Caco-2 (cell line): ENCODE measurements at regions of chr11 and their contacts with region 1.

Region 1: DNA sequence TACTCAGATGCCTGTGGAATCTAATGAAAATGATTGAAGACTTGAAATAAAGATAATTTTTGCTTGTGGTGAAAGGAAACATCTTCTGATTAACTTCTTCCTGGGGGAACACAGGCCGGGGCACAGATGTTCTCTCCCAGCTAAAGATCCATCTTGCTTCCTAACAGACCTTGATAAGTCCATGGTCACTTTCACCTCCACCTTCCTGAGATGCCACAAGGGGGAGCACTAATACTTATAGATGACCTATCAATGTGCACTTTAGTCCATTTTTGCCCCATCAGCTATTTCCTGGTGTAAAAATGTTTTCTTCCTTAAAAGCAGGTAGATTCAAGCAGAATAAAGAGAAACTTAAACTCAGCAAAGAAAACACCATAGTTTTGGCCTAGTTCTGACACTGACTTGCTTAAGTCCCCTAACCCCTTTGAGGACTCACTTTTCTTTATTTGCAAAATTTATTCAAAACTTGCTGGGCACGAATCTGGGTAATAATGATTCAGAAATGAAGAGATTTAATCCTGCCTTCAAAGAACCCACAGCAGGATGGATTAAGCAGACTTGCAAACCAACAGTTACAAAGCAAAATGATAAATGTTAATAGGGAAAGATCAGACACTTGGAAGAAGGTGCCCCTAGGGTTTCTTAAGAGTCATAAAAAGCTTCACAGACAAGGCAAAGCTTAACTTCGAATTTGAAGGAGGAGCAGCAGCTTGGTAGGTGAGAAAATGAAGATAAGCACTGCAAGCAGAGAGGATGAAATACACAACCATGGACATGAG is 158.7 kb downstream of the RAB38 start:
- DNase-seq: peak; percentile 83 to 88
- H3K4me3 ChIP-seq: no peak overlapping the region
- H3K4me3 Mint-ChIP-seq: no peak overlapping the region
- H3K27ac Mint-ChIP-seq: no peak overlapping the region
- H3K4me1 ChIP-seq: no peaks in the 10 kb centered on the region
- H3K4me1 Mint-ChIP-seq: peaks cover 6% of the 10 kb centered on the region
- H3K27me3 ChIP-seq: no peaks in the 10 kb centered on the region
- H3K27me3 Mint-ChIP-seq: no peaks in the 10 kb centered on the region
- CTCF ChIP-seq: peak; percentile 88 to 89

Region 2: DNA sequence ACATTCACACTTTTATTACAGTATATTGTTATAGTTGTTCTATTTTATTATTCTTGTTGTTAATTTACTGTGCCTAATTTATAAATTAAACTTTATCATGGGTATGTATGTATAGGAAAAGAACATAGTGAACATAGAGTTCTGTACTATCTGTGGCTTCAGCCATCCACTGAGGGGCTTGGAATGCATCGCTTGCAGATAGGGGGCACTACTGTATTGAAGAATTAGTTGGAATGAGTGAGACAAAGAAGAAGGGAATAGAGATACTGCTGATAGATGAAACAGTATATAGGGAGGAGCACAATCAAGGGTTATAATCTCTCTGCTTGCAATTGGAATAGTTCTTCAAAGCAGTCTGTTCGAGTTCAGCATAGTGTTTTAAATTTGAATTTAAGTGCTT is 273.6 kb before region 1 on chr11:
- CTCF ChIA-PET with region 1: no interaction called
- POLR2A ChIA-PET with region 1: no interaction called
- intact Hi-C with region 1: loop called (anchors 1 kb)
- DNase-seq: peak in 1 of 2 experiments; percentile 39
- H3K4me3 ChIP-seq: no peak overlapping the region
- H3K4me3 Mint-ChIP-seq: no peak overlapping the region
- H3K27ac Mint-ChIP-seq: no peak overlapping the region
- H3K4me1 ChIP-seq: no peaks in the 10 kb centered on the region
- H3K4me1 Mint-ChIP-seq: peaks cover 7% of the 10 kb centered on the region
- H3K27me3 ChIP-seq: no peaks in the 10 kb centered on the region
- H3K27me3 Mint-ChIP-seq: no peaks in the 10 kb centered on the region
- CTCF ChIP-seq: peak; percentile 33 to 49

Region 3: DNA sequence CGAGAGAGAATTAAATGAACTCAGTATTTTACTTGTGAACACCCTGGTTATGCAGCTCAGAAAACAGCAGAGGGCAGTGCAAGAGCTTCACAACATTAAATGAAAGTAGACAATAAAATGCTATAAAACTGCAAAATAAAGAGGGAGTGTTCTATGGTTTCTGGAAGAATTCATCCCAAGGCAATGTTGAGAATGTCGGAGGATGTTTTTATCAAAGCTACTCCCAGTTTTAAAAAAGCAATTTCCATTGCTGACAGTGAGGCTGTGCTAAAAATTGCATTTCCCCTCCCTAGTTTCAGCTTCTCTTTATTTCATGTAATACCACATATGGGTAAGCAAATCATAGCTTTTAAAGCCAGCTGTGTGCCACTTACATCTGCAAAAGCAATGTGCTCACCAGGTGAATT is 138.2 kb before region 1 on chr11:
- CTCF ChIA-PET with region 1: interaction called, 7 read pairs
- POLR2A ChIA-PET with region 1: no interaction called
- intact Hi-C with region 1: loop called (anchors 1 kb)
- DNase-seq: peak; percentile 32 to 45
- H3K4me3 ChIP-seq: no peak overlapping the region
- H3K4me3 Mint-ChIP-seq: no peak overlapping the region
- H3K27ac Mint-ChIP-seq: no peak overlapping the region
- H3K4me1 ChIP-seq: no peaks in the 10 kb centered on the region
- H3K4me1 Mint-ChIP-seq: no peaks in the 10 kb centered on the region
- H3K27me3 ChIP-seq: no peaks in the 10 kb centered on the region
- H3K27me3 Mint-ChIP-seq: no peaks in the 10 kb centered on the region
- CTCF ChIP-seq: peak; percentile 78 to 82

Region 4: GRCh38 chr11:88042238-88042637 is 25.7 kb after region 1 on chr11:
- CTCF ChIA-PET with region 1: no interaction called
- POLR2A ChIA-PET with region 1: no interaction called
- intact Hi-C with region 1: no loop called
- DNase-seq: no peak
- H3K4me3 ChIP-seq: no peak overlapping the region
- H3K4me3 Mint-ChIP-seq: no peak overlapping the region
- H3K27ac Mint-ChIP-seq: no peak overlapping the region
- H3K4me1 ChIP-seq: no peaks in the 10 kb centered on the region
- H3K4me1 Mint-ChIP-seq: no peaks in the 10 kb centered on the region
- H3K27me3 ChIP-seq: no peaks in the 10 kb centered on the region
- H3K27me3 Mint-ChIP-seq: peaks cover 24% of the 10 kb centered on the region
- CTCF ChIP-seq: no peak

Region 5: DNA sequence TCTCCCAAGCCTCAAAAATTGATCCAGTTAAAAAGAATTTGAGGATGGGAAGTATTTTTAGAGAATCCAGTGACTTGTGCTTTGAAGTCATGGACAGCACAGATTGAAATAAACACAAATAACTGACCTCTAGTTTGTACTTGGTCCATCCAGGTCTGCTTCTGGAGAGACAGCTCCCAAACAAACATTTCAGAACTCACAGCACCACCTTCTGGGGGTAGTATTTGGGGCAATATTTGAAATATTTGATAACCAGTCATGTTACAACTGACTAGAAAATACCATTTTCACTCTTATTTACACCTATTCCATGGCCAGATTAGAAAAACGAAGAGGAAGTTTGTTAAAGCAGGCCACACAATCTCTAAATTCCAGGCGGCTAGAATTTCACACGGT is 264.7 kb after region 1 on chr11:
- CTCF ChIA-PET with region 1: interaction called, 7 read pairs
- POLR2A ChIA-PET with region 1: no interaction called
- intact Hi-C with region 1: loop called (anchors 1 kb)
- DNase-seq: peak in 1 of 2 experiments; percentile 25
- H3K4me3 ChIP-seq: no peak overlapping the region
- H3K4me3 Mint-ChIP-seq: no peak overlapping the region
- H3K27ac Mint-ChIP-seq: no peak overlapping the region
- H3K4me1 ChIP-seq: no peaks in the 10 kb centered on the region
- H3K4me1 Mint-ChIP-seq: no peaks in the 10 kb centered on the region
- H3K27me3 ChIP-seq: no peaks in the 10 kb centered on the region
- H3K27me3 Mint-ChIP-seq: no peaks in the 10 kb centered on the region
- CTCF ChIP-seq: peak; percentile 21 to 33

Region 6: DNA sequence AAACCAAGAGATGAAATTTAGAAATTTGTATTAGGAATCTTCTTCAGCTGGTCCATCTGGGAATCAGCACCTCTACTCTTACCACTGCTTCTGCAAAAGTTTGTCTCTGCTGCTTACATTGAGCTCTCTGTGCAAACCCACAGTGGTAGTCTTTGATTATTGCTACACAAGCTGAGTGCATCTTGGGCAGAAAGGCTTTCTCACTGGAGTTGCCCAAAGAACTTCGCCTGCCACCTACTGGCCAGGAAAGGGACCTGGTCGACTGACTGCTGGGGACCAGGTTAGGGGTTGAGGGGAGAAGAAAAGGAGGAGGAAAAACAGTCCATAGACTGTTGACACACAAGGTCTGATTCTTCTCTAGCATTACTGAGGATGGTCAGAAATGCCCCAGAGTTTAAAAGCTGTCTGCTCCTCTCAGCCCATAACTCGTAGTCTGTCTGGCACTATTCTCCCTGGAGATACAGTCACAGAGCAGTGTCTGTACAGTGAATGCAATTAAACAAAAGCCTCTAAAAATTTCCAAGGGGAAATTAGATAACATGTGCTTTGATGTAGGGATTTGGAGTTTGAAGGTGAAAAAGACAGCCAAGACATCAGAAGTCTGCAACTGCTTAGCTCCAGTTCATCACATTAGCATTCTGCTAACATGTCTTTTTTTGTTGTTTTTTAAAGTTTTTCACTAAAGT is 535.9 kb after region 1 on chr11:
- CTCF ChIA-PET with region 1: interaction called, 15 read pairs
- POLR2A ChIA-PET with region 1: no interaction called
- intact Hi-C with region 1: loop called (anchors 1 kb)
- DNase-seq: peak; percentile 75 to 79
- H3K4me3 ChIP-seq: no peak overlapping the region
- H3K4me3 Mint-ChIP-seq: no peak overlapping the region
- H3K27ac Mint-ChIP-seq: no peak overlapping the region
- H3K4me1 ChIP-seq: no peaks in the 10 kb centered on the region
- H3K4me1 Mint-ChIP-seq: no peaks in the 10 kb centered on the region
- H3K27me3 ChIP-seq: no peaks in the 10 kb centered on the region
- H3K27me3 Mint-ChIP-seq: peaks cover 14% of the 10 kb centered on the region
- CTCF ChIP-seq: peak; percentile 94 to 97

Region 7: GRCh38 chr11:88886796-88887195 is 870.2 kb after region 1 on chr11:
- CTCF ChIA-PET with region 1: no interaction called
- POLR2A ChIA-PET with region 1: no interaction called
- intact Hi-C with region 1: loop called (anchors 1 kb)
- DNase-seq: peak; percentile 57 to 72
- H3K4me3 ChIP-seq: no peak overlapping the region
- H3K4me3 Mint-ChIP-seq: no peak overlapping the region
- H3K27ac Mint-ChIP-seq: no peak overlapping the region
- H3K4me1 ChIP-seq: no peaks in the 10 kb centered on the region
- H3K4me1 Mint-ChIP-seq: no peaks in the 10 kb centered on the region
- H3K27me3 ChIP-seq: no peaks in the 10 kb centered on the region
- H3K27me3 Mint-ChIP-seq: peaks cover 2% of the 10 kb centered on the region
- CTCF ChIP-seq: peak; percentile 49 to 57